ENCODE measurements at regions of chr2 and their contacts with region 1.

Region 1: DNA sequence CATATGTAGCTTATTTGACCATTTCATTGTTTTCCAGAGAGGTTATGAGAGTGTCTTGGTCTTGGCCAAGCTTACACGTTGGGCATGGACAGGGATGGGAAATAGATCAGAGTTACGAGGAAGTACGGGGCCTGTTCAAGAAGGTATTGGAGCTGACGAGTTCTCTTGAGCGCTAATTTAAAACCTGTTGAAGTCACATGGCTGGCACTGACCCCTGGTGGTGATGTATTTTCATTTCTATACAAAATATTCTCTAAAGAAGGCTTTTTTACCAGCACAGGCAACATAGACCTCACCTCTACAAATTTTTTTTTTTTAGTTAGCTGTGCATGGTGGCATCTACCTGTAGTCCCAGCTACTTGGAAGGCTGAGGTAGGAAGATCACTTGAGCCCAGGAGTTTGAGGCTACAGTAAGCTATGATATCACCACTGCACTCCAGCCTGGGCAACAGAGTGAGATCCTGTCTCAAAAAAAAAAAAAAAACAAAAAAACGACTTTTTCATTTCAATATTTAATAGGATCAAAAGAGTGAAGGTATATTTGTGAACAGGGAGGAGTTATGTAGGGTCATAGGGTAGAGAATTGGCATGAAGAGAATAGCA is 19.6 kb downstream of the UGP2 start:
- DNase-seq: peak; percentile 15
- H3K27ac ChIP-seq: no peak overlapping the region
- CTCF ChIP-seq: peak; percentile 41; the same call in 1 of the 2 replicates

Region 2: DNA sequence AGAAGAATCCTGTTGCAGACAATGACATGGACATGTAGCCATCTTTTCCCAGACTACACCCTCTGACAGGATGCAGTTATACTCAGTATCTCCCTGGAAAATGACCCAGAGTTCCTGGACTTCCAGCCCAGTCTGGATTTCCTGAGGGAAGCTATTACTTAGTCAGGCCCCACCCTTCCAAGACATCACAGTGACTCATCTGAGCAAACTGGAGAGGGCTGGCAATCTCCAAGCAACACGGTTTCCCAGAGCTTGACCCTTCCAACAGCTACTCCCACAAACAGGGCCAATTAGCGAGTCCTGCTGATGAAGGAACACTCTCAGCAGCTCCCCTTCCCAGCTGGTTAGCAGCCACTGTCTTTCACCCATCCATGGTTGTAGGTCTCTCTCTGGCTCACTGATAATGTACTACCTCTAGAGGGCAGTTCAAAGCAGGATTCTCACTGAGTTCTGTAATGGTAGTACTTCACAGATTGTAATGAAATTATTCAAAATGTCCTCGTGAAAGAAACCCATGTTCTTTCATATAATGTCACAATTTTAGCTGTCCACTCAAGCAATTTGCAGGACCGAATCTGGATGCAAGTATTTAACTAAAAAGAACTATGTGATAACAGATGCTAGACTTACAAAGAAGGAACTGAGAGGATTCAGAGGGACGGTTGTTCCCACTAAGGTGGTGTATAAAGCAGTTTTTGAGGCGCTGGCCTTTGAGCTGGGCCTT is 162.3 kb before region 1 on chr2:
- CTCF ChIA-PET with region 1: interaction called, 16 read pairs
- POLR2A ChIA-PET with region 1: no interaction called
- DNase-seq: peak; percentile 77
- H3K27ac ChIP-seq: peak overlapping the region; percentile 73
- CTCF ChIP-seq: peak; percentile 27; the same call in 1 of the 2 replicates